Activated CD8-positive, alpha-beta T cell treated with anti-CD3 and anti-CD28 coated beads for 36 hours (primary cell): ENCODE measurements at regions of chr1 and their contacts with region 1.

Region 1: GRCh38 chr1:187755536-187755935 is 926.8 kb downstream of the PLA2G4A start:
- DNase-seq: no peak
- ATAC-seq: no peak
- H3K4me3 Mint-ChIP-seq: no peak overlapping the region
- H3K27ac Mint-ChIP-seq: no peak overlapping the region
- H3K4me1 Mint-ChIP-seq: no peaks in the 10 kb centered on the region
- H3K27me3 Mint-ChIP-seq: no peaks in the 10 kb centered on the region
- CTCF ChIP-seq: no peak

Region 2: GRCh38 chr1:187744665-187745064 is 10.9 kb before region 1 on chr1:
- CTCF ChIA-PET with region 1: no interaction called
- POLR2A ChIA-PET with region 1: no interaction called
- intact Hi-C with region 1: loop called (anchors 1 kb)
- DNase-seq: no peak
- ATAC-seq: no peak
- H3K4me3 Mint-ChIP-seq: no peak overlapping the region
- H3K27ac Mint-ChIP-seq: no peak overlapping the region
- H3K4me1 Mint-ChIP-seq: no peaks in the 10 kb centered on the region
- H3K27me3 Mint-ChIP-seq: no peaks in the 10 kb centered on the region
- CTCF ChIP-seq: no peak